Psoas muscle (tissue), 8 donors: ENCODE measurements at regions of chr14 and their contacts with region 1.

Region 1: DNA sequence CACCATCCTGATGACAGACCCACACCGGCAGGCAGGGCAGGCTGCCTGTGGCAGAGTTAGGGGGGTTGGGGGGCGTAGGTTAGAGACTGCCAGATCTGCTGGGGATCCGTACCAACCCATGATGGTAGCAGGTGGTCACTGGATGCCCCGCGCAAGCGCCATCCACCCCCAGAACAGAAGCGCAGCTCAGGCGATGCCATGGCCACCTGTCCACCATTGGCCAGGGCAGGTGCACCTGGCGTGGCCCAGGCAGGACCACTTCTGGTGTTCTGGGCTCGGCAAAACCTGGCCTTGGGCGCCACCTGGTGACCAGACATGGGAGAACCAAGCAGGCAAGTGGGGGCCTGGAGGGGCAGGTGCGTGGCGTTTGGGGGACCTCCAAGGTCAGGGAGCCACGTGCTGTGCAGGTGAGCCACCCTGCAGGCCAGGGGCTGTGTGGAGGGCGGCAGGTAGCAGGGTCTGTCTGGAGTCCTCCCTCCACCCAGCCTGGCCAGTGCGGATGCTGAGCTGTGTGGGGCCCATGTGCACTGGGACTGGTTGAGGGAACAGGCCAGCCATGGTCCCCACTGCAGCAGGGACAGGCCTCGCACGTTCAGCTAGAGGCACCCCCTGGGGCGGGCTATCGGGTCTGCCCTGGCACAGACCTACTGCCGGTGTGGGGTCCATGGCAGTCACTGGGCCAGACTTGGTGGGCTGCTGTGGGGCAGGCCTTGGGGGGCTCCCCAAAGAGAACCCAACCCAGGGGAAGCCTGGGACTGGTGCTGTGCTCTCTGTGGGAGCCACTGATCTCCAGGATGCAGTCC is 15.6 kb downstream of the BAG5 start:
- DNase-seq: peak; percentile 79 to 88
- ATAC-seq: peak; percentile 23 to 62 (median 48)
- H3K4me3 ChIP-seq: no peak overlapping the region
- H3K27ac ChIP-seq: no peak overlapping the region
- H3K4me1 ChIP-seq: peaks cover 46% of the 10 kb centered on the region
- H3K27me3 ChIP-seq: no peaks in the 10 kb centered on the region
- CTCF ChIP-seq: peak; percentile 93

Region 2: GRCh38 chr14:103499706-103500105 is 47.1 kb before region 1 on chr14:
- intact Hi-C with region 1: loop called in 1 of 2 experiments (anchors 10 kb)
- DNase-seq: no peak
- ATAC-seq: peak in 1 of 4 donors; percentile 17
- H3K4me3 ChIP-seq: no peak overlapping the region
- H3K27ac ChIP-seq: no peak overlapping the region
- H3K4me1 ChIP-seq: peaks cover 19% of the 10 kb centered on the region
- H3K27me3 ChIP-seq: no peaks in the 10 kb centered on the region
- CTCF ChIP-seq: no peak

Region 3: GRCh38 chr14:103518422-103519042 is 28.3 kb before region 1 on chr14:
- intact Hi-C with region 1: loop called (anchors 1 to 2 kb)
- DNase-seq: peak; percentile 71 to 86
- ATAC-seq: peak; percentile 53 to 78 (median 65)
- H3K4me3 ChIP-seq: no peak overlapping the region
- H3K27ac ChIP-seq: no peak overlapping the region
- H3K4me1 ChIP-seq: peaks cover 26% of the 10 kb centered on the region
- H3K27me3 ChIP-seq: peaks cover 0 to 24% (median 15%) of the 10 kb centered on the region in 3 donors
- CTCF ChIP-seq: peak; percentile 91